Colonic mucosa (tissue), 4 donors: ENCODE measurements at regions of chr17 and their contacts with region 1.

Region 1: DNA sequence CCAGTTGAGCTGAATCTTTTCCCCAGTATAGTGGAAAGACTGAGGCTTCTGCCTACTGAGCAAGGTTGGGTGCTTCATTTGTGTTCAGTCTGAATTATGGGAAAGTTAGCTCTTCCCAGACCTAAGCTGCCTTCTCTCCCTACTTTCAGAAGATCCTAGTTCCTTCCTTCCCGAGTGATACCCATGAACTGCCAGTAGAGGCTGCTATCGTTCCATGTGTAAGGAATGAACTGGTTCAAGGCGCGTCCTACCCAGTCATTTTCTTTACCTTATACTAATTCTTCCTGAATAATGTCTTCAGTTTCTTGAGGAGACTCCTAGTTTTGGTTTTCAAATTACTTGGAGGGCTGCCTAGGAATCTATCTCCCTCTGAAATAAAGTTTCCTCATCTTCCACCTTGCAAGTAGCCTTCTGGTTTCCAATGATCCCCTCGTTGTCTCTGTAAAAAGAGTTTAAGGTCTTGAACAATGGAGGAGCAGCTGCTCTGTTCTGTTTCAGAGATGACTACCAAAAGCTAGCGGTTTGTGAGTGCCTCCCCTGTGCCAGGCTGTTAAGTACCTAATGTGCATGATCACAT is 934 bp upstream of the AOC2 start:
- DNase-seq: peak; percentile 48
- H3K4me3 ChIP-seq: no peak overlapping the region
- H3K27ac ChIP-seq: no peak overlapping the region
- H3K4me1 ChIP-seq: no peaks in the 10 kb centered on the region
- H3K27me3 ChIP-seq: no peaks in the 10 kb centered on the region
- CTCF ChIP-seq: peak; percentile 60

Region 2: DNA sequence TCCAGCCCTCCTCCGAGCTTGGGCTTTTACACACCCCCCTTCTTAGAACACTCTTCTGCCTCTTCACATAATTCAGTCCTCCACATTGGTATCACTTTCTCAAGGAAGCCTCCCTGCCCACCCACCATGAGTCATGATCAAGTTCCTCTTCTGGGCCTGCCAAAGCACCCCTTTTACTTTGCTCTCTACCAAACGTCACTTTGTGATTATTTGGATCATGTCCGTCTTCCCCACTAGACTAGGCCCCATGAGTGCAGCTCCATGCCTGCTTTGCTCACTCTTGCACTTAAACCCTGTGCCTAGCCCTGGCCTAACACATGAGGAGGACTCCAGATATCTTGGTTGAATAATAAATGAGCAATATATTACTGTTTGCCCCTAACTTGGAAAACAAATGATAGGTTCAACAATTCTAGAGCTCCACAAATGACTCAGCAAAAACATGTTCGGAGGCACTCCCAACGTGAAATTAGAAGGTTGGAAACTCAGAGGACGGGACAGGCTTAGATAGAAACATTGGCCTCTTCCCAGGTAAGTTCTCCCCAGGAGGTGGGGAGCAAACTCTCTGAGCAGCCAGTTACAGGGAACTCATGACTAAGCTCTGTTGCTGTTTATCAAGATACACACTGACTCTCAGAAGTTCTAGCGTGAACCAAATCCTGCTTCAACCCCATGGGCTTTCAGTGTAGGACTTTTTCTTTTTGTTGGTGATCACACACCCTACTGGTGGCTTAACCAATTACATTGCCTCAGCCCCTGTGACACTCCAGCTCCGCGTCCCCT is 85.5 kb after region 1 on chr17:
- intact Hi-C with region 1: loop called (anchors 2 kb)
- DNase-seq: peak; percentile 38
- H3K4me3 ChIP-seq: no peak overlapping the region
- H3K27ac ChIP-seq: no peak overlapping the region
- H3K4me1 ChIP-seq: peaks cover 4% of the 10 kb centered on the region
- H3K27me3 ChIP-seq: no peaks in the 10 kb centered on the region
- CTCF ChIP-seq: no peak

Region 3: GRCh38 chr17:42937712-42938596 is 94.5 kb after region 1 on chr17:
- intact Hi-C with region 1: loop called (anchors 2 kb)
- DNase-seq: peak; percentile 22
- H3K4me3 ChIP-seq: no peak overlapping the region
- H3K27ac ChIP-seq: no peak overlapping the region
- H3K4me1 ChIP-seq: no peaks in the 10 kb centered on the region
- H3K27me3 ChIP-seq: no peaks in the 10 kb centered on the region
- CTCF ChIP-seq: peak; percentile 43